ENCODE measurements at regions of chr13 and their contacts with region 1.

Region 1: DNA sequence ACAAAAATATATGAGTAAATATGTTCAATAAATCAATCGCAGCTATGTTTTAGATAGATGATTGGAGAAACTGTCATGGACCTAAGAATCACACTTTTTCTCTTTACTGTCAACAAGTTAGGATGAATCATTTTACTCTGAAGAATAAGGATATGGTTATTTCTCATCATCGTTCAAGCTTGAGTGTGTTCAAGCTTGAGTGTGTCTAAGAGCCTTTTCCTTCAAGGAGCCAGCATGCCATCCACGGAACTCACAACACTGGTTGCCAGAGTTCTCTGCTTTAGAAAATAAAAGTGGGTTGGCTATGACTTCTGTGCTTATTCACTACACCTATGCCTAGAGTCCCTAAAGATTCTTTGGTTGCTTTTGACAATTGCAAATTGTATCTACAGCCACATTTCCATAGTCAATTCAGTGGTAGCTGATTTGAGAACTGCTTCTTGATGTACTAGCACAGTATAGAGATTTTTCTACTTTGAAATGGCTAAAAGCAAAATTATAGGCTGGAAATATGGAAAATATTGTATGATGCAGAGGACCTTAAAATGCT is 58.1 kb upstream of the SCEL start:
- DNase-seq: no peak
- H3K27ac ChIP-seq: no peak overlapping the region
- CTCF ChIP-seq: no peak

Region 2: GRCh38 chr13:77329133-77329910 is 148.1 kb before region 1 on chr13:
- CTCF ChIA-PET with region 1: interaction called, 13 read pairs
- POLR2A ChIA-PET with region 1: no interaction called
- DNase-seq: peak; percentile 66
- H3K27ac ChIP-seq: peak overlapping the region; percentile 98
- CTCF ChIP-seq: no peak

Region 3: DNA sequence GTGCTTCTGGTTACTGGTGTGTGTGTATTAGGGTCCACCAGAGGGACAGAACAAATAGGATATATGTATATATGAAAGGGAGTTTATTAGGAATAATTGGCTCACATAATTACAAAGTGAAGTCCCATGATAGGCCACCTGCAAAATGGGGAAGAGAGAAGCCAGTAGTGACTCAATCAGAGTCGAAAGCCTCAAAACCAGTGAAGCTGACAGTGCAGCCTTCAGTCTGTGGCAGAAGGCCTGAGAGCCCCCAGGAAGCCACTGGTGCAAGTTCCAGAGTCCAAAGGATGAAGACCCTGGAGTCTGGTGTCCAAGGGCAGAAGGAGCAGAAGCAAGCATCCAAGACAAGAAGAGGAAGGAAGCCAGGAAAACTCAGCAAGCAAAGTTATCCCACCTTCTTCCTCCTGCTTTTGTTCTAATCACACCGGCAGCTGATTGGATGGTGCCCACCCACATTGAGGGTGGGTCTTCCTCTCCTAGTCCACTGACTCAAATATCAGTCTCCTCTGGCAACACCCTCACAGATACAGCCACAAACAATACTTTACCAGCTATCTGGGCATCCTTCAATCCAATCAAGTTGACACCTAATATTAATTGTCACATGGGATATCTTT is 36.5 kb after region 1 on chr13:
- CTCF ChIA-PET with region 1: no interaction called
- POLR2A ChIA-PET with region 1: no interaction called
- DNase-seq: no peak
- H3K27ac ChIP-seq: no peak overlapping the region
- CTCF ChIP-seq: no peak

Region 4: DNA sequence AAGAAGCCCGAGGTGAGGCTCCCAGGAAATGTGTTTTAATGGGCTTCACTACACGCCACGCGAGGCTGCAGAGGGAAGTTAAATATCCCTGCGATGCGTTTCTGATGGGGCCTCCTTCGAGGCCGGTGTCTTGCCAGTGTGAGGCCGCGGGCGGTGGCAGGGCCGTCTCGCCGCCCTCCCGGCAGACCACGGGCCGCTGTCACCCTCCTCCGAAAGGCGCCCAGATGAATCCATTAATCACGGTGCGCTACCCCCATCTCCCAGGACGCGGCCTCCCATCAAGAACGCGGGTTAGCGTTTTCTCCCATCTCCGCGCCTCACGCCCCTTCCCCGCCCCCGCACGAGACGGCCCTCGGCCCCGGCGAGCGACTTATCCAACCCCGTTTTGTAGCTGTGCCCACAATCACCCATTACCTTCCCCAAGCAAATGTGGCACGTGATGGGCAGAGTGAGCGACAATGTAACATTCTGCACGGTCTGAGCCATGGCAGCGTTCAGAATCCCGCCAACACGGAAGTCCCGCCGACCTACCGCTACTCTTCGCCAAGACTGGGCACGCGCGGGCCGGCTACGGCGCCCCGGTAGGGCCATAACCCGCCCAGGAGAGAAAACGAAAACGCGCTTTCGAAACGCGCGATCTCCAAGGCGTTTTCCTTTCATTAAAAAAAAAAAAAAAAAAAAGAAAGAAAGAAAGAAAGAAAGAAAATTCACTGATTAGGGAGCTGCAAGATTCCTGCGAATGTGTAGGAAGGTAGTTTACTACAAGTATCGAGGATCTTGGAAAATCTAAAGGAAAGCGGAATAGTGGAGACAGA is 1181.5 kb after region 1 on chr13 and contains the start of gene OBI1:
- CTCF ChIA-PET with region 1: no interaction called
- POLR2A ChIA-PET with region 1: no interaction called
- DNase-seq: peak; percentile 82
- H3K27ac ChIP-seq: peak within 1 kb of the TSS; percentile 86
- CTCF ChIP-seq: no peak